CD8-positive, alpha-beta memory T cell (primary cell): ENCODE measurements at regions of chr1 and their contacts with region 1.

Region 1: DNA sequence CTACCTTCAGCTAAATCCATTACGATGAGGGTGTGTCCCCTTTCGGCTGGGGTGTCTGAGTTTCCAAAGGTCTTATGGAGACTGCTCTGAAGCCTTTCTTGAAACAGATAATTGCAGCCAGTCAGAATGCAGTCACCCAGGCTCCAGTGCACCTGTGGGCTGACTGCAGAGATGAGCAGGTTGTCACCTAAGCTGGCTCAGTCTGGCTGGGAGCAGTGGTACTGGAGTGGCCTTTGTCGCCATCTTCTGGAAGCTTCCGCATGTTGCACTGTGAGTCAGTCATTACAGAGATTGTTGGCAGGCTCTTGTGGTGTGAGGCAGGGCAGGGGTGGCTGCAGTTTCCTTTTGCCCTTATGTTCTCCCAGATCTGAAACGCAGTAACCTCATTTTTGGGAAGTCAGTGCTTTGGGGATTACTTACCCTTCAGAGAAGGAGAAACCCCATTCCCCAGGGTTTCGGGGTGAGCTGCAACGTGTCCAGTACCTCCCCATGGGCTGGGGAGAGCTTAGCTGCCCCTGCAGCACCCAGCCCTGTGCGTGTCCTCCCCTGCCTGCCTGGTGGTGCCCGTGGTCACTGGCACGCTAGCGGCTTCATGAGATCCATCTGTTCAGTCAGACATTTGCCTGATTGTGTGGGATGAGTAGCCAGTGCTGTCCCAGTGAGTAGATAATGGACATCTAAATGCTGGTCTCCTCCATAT is 48.0 kb downstream of the SMYD2 start:
- DNase-seq: peak; percentile 57 to 82 (median 66)
- H3K4me3 ChIP-seq: no peak overlapping the region
- H3K4me3 Mint-ChIP-seq: peak overlapping the region in 1 of 7 donors; percentile 68
- H3K27ac ChIP-seq: no peak overlapping the region
- H3K27ac Mint-ChIP-seq: peak overlapping the region in 5 of 8 donors; percentile 38 to 89 (median 52)
- H3K4me1 ChIP-seq: no peaks in the 10 kb centered on the region
- H3K4me1 Mint-ChIP-seq: peaks cover 0 to 14% (median 5%) of the 10 kb centered on the region in 3 donors
- H3K27me3 ChIP-seq: no peaks in the 10 kb centered on the region
- H3K27me3 Mint-ChIP-seq: no peaks in the 10 kb centered on the region

Region 2: GRCh38 chr1:214236477-214236876 is 92.4 kb before region 1 on chr1:
- CTCF ChIA-PET with region 1: interaction called, 14 read pairs
- POLR2A ChIA-PET with region 1: no interaction called
- DNase-seq: no peak
- H3K4me3 ChIP-seq: no peak overlapping the region
- H3K4me3 Mint-ChIP-seq: no peak overlapping the region
- H3K27ac ChIP-seq: no peak overlapping the region
- H3K27ac Mint-ChIP-seq: no peak overlapping the region
- H3K4me1 ChIP-seq: no peaks in the 10 kb centered on the region
- H3K4me1 Mint-ChIP-seq: no peaks in the 10 kb centered on the region
- H3K27me3 ChIP-seq: peaks cover 9% of the 10 kb centered on the region
- H3K27me3 Mint-ChIP-seq: peaks cover 5 to 43% of the 10 kb centered on the region in 2 donors

Region 3: GRCh38 chr1:214271174-214271858 is 57.6 kb before region 1 on chr1:
- CTCF ChIA-PET with region 1: interaction called, 53 read pairs
- POLR2A ChIA-PET with region 1: interaction called, 5 read pairs
- DNase-seq: no peak
- H3K4me3 ChIP-seq: no peak overlapping the region
- H3K4me3 Mint-ChIP-seq: no peak overlapping the region
- H3K27ac ChIP-seq: no peak overlapping the region
- H3K27ac Mint-ChIP-seq: no peak overlapping the region
- H3K4me1 ChIP-seq: no peaks in the 10 kb centered on the region
- H3K4me1 Mint-ChIP-seq: no peaks in the 10 kb centered on the region
- H3K27me3 ChIP-seq: peaks cover 6% of the 10 kb centered on the region
- H3K27me3 Mint-ChIP-seq: peaks cover 7 to 17% of the 10 kb centered on the region in 2 donors

Region 4: GRCh38 chr1:214303141-214303930 is 25.6 kb before region 1 on chr1:
- CTCF ChIA-PET with region 1: interaction called, 17 read pairs
- POLR2A ChIA-PET with region 1: no interaction called
- DNase-seq: no peak
- H3K4me3 ChIP-seq: no peak overlapping the region
- H3K4me3 Mint-ChIP-seq: peak overlapping the region in 1 of 7 donors; percentile 59
- H3K27ac ChIP-seq: no peak overlapping the region
- H3K27ac Mint-ChIP-seq: no peak overlapping the region
- H3K4me1 ChIP-seq: no peaks in the 10 kb centered on the region
- H3K4me1 Mint-ChIP-seq: peaks cover 12 to 37% (median 36%) of the 10 kb centered on the region in 3 donors
- H3K27me3 ChIP-seq: no peaks in the 10 kb centered on the region
- H3K27me3 Mint-ChIP-seq: no peaks in the 10 kb centered on the region